Right cardiac atrium (tissue), 5 donors: ENCODE measurements at regions of chr1 and their contacts with region 1.

Region 1: GRCh38 chr1:179121159-179121938 is 39.5 kb downstream of the TOR3A start:
- DNase-seq: no peak
- ATAC-seq: peak; percentile 29 to 51
- H3K4me3 ChIP-seq: no peak overlapping the region
- H3K27ac ChIP-seq: no peak overlapping the region
- H3K4me1 ChIP-seq: peaks cover 2% of the 10 kb centered on the region
- H3K27me3 ChIP-seq: no peaks in the 10 kb centered on the region

Region 2: DNA sequence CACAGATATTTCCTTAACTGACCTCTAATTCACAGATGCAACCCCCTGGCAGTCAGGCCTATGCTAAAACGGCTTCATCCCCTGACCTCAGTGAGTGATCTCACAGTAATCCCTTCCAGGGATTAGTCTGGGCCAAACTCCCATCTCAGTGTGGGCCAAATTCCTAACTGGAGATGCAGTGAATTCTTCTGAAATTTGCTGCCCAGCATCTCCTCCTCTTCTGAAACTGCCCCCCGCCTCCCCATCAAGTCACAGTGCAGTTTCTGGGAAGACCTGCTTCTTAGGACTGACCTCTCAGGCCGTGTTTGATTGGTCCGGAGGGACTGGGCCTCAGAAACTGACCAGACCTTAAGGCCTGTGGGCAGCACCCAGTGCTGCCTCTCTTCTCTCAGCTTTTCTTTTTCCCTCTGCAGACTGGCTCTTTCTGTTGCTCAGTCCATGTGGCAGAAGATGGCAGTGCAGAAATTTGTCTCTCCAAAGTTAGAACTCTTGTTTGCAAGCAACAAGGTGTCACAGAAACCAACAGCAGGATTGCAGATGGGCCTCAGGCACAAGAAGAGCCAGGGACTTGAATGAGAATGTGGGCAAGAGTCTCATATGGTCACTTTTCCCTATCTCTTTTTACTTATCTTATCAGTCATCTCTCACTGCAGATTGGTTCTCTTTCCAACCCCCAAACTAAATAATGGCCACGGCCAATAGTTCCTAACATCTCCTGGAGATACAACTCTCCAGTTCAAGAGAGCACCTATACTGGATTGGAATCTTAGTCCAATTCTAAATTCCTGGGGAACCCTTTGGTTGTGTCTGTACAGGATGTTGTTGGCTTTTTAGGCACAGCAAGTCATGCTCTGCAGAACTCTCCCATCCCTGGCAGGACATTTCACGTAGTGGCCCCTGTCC is 491.8 kb before region 1 on chr1:
- intact Hi-C with region 1: no loop called
- DNase-seq: peak in 1 of 3 donors; percentile 44
- ATAC-seq: no peak
- H3K4me3 ChIP-seq: no peak overlapping the region
- H3K27ac ChIP-seq: peak overlapping the region; percentile 52
- H3K4me1 ChIP-seq: peaks cover 2% of the 10 kb centered on the region
- H3K27me3 ChIP-seq: no peaks in the 10 kb centered on the region

Region 3: DNA sequence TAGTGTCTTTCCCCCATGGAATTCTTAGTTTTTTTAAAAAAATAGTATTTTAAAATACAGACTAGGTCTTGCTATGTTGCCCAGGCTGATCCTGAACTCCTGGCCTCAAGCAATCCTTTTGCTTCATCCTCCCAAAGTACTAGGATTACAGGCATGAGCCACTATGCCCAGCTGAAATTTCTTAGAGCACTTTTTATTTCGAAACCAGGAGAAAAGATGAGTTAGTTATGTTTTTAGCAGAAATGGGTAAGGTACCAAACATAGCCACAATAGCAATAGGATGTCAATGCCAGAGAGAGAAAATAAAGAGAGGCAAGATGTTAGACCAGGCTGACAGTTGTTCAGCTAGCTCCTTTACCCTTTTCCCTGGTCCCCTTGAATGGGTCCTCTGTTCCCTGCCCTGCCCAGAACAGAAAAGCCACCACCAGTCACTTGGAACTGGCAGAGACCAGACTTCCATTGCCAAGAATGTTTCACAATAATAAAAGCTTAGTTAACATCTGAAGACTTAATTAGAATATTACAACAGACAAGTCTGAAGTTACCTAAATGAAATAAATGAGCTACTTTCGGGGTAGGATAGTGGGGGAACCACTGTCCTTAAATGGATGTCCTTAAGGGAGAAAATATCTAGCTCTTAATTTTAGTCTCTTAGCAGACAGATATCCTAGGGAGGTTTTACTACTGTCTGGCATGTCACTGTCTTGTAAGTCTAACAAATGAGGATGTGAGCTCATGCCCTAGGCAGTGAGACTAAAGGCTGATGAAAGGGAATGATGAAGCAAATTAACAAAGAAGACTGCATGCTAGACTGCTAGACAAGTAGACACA is 53.9 kb after region 1 on chr1:
- intact Hi-C with region 1: loop called in 1 of 4 experiments (anchors 10 kb)
- DNase-seq: peak in 1 of 3 donors; percentile 34
- ATAC-seq: peak; percentile 84 to 85
- H3K4me3 ChIP-seq: no peak overlapping the region
- H3K27ac ChIP-seq: peak overlapping the region; percentile 58
- H3K4me1 ChIP-seq: peaks cover 4% of the 10 kb centered on the region
- H3K27me3 ChIP-seq: no peaks in the 10 kb centered on the region

Region 4: GRCh38 chr1:179190861-179191260 is 69.5 kb after region 1 on chr1:
- intact Hi-C with region 1: loop called in 3 of 4 experiments (anchors 5 to 10 kb)
- DNase-seq: peak in 2 of 3 donors; percentile 24 to 52
- ATAC-seq: peak; percentile 83 to 95
- H3K4me3 ChIP-seq: no peak overlapping the region
- H3K27ac ChIP-seq: no peak overlapping the region
- H3K4me1 ChIP-seq: no peaks in the 10 kb centered on the region
- H3K27me3 ChIP-seq: no peaks in the 10 kb centered on the region

Region 5: GRCh38 chr1:179229214-179230140 is 108.1 kb after region 1 on chr1 and contains the start of gene ABL2:
- intact Hi-C with region 1: no loop called
- DNase-seq: peak; percentile 44 to 85 (median 78)
- ATAC-seq: peak; percentile 90 to 91
- H3K4me3 ChIP-seq: peak within 1 kb of the TSS; percentile 68
- H3K27ac ChIP-seq: peak within 1 kb of the TSS; percentile 57
- H3K4me1 ChIP-seq: no peaks in the 10 kb centered on the region
- H3K27me3 ChIP-seq: no peaks in the 10 kb centered on the region
- total RNA-seq, gene ABL2: 9.9 to 18.4 (median 10.5) TPM

Region 6: GRCh38 chr1:179293340-179294327 is 172.3 kb after region 1 on chr1 and contains the start of gene SOAT1:
- intact Hi-C with region 1: loop called in 1 of 4 experiments (anchors 10 kb)
- DNase-seq: peak; percentile 97 to 99 (median 99)
- ATAC-seq: peak; percentile 99 to 100
- H3K4me3 ChIP-seq: peak within 1 kb of the TSS; percentile 70
- H3K27ac ChIP-seq: peak within 1 kb of the TSS; percentile 97
- H3K4me1 ChIP-seq: no peaks in the 10 kb centered on the region
- H3K27me3 ChIP-seq: no peaks in the 10 kb centered on the region
- total RNA-seq, gene SOAT1: 15.3 to 20.3 (median 18.5) TPM